ENCODE measurements at regions of chr11 and their contacts with region 1.

Region 1: DNA sequence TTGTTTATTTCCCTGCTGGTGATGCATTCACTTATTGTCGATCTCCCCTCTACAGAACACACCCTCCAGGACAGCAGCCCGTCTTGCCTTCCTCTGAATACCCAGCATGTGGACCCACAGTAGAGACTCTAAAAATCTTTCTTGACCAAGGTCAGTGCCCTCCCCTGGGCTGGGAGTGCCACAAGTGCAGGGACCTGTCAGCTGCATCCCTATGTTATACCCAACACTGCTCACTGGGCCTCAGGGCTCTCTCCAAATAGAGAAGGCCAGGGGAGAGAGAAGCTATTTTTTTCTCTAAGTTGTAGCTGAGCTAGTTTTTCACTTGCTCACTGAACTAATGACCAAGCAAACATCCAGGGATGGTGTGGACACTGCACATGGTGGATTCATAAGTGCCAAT is 9.8 kb downstream of the KCNJ1 start:
- DNase-seq: no peak
- ATAC-seq: no peak
- H3K4me3 ChIP-seq: no peak overlapping the region
- H3K4me3 Mint-ChIP-seq: no peak overlapping the region
- H3K27ac ChIP-seq: no peak overlapping the region
- H3K27ac Mint-ChIP-seq: no peak overlapping the region
- H3K4me1 ChIP-seq: peaks cover 0 to 9% of the 10 kb centered on the region in 2 experiments
- H3K4me1 Mint-ChIP-seq: peaks cover 5 to 11% (median 9%) of the 10 kb centered on the region in 3 donors
- H3K27me3 ChIP-seq: peaks cover 0 to 23% of the 10 kb centered on the region in 2 experiments
- H3K27me3 Mint-ChIP-seq: peaks cover 3 to 5% of the 10 kb centered on the region in 2 donors

Region 2: DNA sequence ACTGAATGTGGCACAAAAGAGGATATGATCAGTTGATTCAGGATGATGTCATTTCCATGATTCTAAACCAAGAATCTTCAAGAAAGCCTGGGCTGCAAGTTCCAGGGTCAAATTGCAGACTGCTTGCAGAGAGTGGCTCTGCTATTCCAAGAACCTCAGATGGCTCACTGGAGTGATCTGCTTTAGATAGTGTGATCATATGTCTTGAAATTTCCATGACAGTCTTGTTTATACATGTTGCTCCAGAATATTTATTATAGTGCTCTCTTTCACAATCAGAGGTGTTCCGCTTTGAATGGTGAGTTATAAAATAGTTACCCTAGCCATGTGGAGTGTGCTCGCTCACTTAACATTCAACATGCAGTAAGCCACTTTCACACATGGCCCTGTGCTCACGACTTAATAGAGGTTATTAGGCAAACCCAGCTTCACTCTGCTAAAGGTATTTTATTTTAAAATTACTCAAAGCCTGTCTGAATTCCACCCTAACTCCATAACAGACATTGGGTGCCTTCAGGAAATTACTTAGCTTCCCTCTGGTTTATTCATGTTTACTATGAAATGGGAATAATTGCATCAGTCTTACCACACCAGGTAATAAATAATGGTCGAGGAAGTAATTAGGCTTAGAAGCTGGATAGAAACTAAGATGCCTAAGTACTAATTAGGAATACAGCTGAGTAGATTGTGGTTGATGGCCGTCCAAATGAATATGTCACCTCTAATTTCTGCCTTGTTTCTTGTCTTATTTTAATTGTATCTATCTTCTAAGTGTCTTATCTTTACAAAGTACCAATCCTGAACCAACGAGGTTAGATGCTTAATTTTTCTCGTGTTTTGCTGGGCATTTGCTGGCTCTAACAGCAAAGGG is 457.9 kb before region 1 on chr11:
- CTCF ChIA-PET with region 1: no interaction called
- POLR2A ChIA-PET with region 1: no interaction called
- DNase-seq: no peak
- ATAC-seq: no peak
- H3K4me3 ChIP-seq: no peak overlapping the region
- H3K4me3 Mint-ChIP-seq: no peak overlapping the region
- H3K27ac ChIP-seq: no peak overlapping the region
- H3K27ac Mint-ChIP-seq: peak overlapping the region in 1 of 2 donors; percentile 50
- H3K4me1 ChIP-seq: no peaks in the 10 kb centered on the region
- H3K4me1 Mint-ChIP-seq: peaks cover 17 to 28% (median 24%) of the 10 kb centered on the region in 3 donors
- H3K27me3 ChIP-seq: no peaks in the 10 kb centered on the region
- H3K27me3 Mint-ChIP-seq: no peaks in the 10 kb centered on the region

Region 3: GRCh38 chr11:128603752-128604414 is 253.5 kb before region 1 on chr11:
- CTCF ChIA-PET with region 1: no interaction called
- POLR2A ChIA-PET with region 1: interaction called in 1 of 2 experiments, 13 read pairs
- DNase-seq: no peak
- ATAC-seq: peak in 2 of 4 experiments; percentile 17 to 31
- H3K4me3 ChIP-seq: no peak overlapping the region
- H3K4me3 Mint-ChIP-seq: no peak overlapping the region
- H3K27ac ChIP-seq: no peak overlapping the region
- H3K27ac Mint-ChIP-seq: peak overlapping the region in 1 of 2 donors; percentile 8
- H3K4me1 ChIP-seq: peaks cover 18 to 26% of the 10 kb centered on the region in 2 experiments
- H3K4me1 Mint-ChIP-seq: peaks cover 53 to 74% (median 63%) of the 10 kb centered on the region in 3 donors
- H3K27me3 ChIP-seq: no peaks in the 10 kb centered on the region
- H3K27me3 Mint-ChIP-seq: no peaks in the 10 kb centered on the region

Measured in T-cell (primary cell).